ENCODE measurements at regions of chr2 and their contacts with region 1.

Region 1: DNA sequence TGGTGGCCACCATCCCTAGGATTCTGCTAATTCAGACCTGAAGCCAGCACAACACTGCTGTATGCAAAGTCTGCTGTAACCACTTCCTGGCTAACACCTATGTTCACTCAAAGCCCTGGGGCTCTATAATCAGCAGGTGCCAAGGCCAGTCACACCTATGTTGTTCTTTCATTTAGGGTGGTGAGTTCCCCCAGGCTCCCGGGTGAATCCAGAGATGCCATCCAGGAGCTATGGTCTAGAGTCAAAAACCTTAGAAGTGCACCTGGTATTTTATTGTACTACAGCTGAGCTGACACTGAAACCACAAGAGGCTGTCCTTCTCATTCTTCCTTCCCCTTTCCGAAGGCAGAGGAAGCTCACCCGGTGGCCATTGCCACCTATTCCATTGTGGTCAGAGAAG is 46.2 kb upstream of the CCDC141 start:
- DNase-seq: peak; percentile 83
- H3K4me3 ChIP-seq: peak overlapping the region; percentile 12
- H3K27ac ChIP-seq: peak overlapping the region; percentile 56
- H3K4me1 ChIP-seq: peaks cover 46% of the 10 kb centered on the region
- CTCF ChIP-seq: no peak

Region 2: GRCh38 chr2:179106676-179107428 is 10.8 kb after region 1 on chr2:
- CTCF ChIA-PET with region 1: interaction called, 3 read pairs
- POLR2A ChIA-PET with region 1: interaction called, 16 read pairs
- intact Hi-C with region 1: no loop called
- DNase-seq: no peak
- H3K4me3 ChIP-seq: no peak overlapping the region
- H3K27ac ChIP-seq: no peak overlapping the region
- H3K4me1 ChIP-seq: no peaks in the 10 kb centered on the region
- CTCF ChIP-seq: no peak

Measured in OCI-LY7 (cell line).